Naive thymus-derived CD4-positive, alpha-beta T cell (primary cell): ENCODE measurements at regions of chr9 and their contacts with region 1.

Region 1: DNA sequence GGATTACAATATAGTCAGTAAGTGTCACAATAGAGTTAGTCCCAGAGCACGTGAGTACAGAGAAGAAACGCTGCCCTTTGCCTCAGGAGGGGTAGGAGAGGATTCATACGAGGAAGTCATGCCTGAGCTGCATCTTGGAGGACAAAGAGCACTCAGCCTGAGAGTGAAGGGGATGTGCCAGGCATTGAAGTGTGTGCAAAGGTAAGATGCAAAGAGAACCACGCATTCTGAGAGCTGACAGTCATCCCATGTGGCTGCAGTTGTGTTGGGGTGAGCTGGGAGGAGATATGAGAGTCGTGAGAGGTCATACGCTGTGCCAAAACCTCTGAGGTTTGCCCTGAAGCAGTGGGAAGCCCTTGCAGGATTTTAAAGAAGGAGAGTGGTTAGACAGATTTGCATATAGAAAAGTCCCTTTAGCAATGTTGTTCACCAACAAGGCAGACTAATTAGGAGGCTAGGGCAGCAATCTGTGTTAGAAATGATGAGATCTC is 97.5 kb downstream of the PIP5K1B start:
- DNase-seq: peak in 1 of 9 donors; percentile 59
- ATAC-seq: peak; percentile 29
- H3K4me3 ChIP-seq: no peak overlapping the region
- H3K4me3 Mint-ChIP-seq: no peak overlapping the region
- H3K27ac ChIP-seq: no peak overlapping the region
- H3K27ac Mint-ChIP-seq: no peak overlapping the region
- H3K4me1 ChIP-seq: no peaks in the 10 kb centered on the region
- H3K4me1 Mint-ChIP-seq: peaks cover 0 to 11% (median 0%) of the 10 kb centered on the region in 7 donors
- H3K27me3 ChIP-seq: no peaks in the 10 kb centered on the region
- H3K27me3 Mint-ChIP-seq: peaks cover 0 to 2% (median 0%) of the 10 kb centered on the region in 5 donors

Region 2: GRCh38 chr9:68749568-68750279 is 52.8 kb before region 1 on chr9:
- CTCF ChIA-PET with region 1: no interaction called
- POLR2A ChIA-PET with region 1: no interaction called
- intact Hi-C with region 1: loop called in 1 of 2 experiments (anchors 10 kb)
- DNase-seq: peak in 1 of 9 donors; percentile 1
- ATAC-seq: no peak
- H3K4me3 ChIP-seq: no peak overlapping the region
- H3K4me3 Mint-ChIP-seq: no peak overlapping the region
- H3K27ac ChIP-seq: no peak overlapping the region
- H3K27ac Mint-ChIP-seq: no peak overlapping the region
- H3K4me1 ChIP-seq: no peaks in the 10 kb centered on the region
- H3K4me1 Mint-ChIP-seq: peaks cover 0 to under 1% (median 0%) of the 10 kb centered on the region in 7 donors
- H3K27me3 ChIP-seq: no peaks in the 10 kb centered on the region
- H3K27me3 Mint-ChIP-seq: peaks cover 0 to 11% (median 6%) of the 10 kb centered on the region in 5 donors